Prostate gland (tissue), 2 donors: ENCODE measurements at regions of chr6 and their contacts with region 1.

Region 1: GRCh38 chr6:144284783-144285547 is at the start of gene UTRN:
- DNase-seq: peak; percentile 76
- H3K4me3 ChIP-seq: peak within 1 kb of the TSS; percentile 69 to 83
- H3K27ac ChIP-seq: peak within 1 kb of the TSS; percentile 90 to 94
- H3K4me1 ChIP-seq: no peaks in the 10 kb centered on the region
- H3K27me3 ChIP-seq: no peaks in the 10 kb centered on the region
- CTCF ChIP-seq: peak in 1 of 4 experiments; percentile 11
- POLR2A ChIP-seq: peak; percentile 19
- total RNA-seq, gene UTRN: 150 to 188 TPM

Region 2: GRCh38 chr6:144095331-144096002 is 189.5 kb before region 1 on chr6 and contains the start of gene SF3B5:
- intact Hi-C with region 1: loop called (anchors 5 kb)
- DNase-seq: peak; percentile 99
- H3K4me3 ChIP-seq: peak within 1 kb of the TSS; percentile 69 to 83
- H3K27ac ChIP-seq: peak within 1 kb of the TSS; percentile 73 to 82
- H3K4me1 ChIP-seq: peaks cover 4% of the 10 kb centered on the region
- H3K27me3 ChIP-seq: no peaks in the 10 kb centered on the region
- CTCF ChIP-seq: peak in 1 of 4 experiments; percentile 21
- POLR2A ChIP-seq: peak; percentile 67
- total RNA-seq, gene SF3B5: 198 to 212 TPM

Region 3: DNA sequence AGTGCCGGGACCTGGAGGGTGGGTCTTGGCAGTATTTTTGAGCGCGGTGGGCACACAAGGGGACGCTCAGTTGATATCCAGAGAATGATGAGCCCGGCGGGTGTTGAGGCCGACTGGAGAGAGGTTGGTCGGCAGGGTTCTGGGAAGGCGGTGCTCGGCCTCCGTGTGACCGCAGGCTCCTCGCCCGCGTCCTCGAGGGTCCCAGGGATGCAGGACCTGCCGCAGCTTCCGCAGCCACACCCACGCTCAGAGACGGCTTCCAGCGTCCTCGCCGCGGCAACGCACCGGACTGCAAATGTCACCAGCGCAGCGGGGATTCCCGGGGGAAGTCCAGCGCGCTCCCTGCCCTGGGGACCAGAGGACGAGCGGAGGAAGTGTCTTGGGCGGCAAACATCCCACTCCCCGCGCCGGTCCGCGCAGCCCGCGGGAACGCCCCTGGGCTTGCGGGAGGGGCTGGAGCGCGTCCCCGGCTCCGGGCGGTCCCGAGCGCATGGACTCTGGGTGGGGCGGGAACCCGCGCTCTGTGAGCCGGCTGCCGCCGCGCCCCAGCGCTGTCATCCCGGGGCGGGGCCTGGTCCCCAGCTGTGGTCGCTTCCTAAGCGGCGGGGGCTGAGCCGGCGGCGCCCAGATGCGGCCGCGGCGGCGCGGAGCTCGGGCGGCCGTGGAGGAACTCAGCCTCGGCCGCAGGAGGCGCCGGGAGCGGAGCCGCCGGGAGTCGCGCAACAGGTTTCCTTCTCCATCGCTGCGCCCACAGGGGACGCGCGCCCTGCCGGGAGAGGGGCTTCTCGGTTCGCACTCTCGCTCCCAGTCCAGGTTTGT is 134.9 kb before region 1 on chr6 and contains the start of gene STX11:
- intact Hi-C with region 1: no loop called
- DNase-seq: peak; percentile 21
- H3K4me3 ChIP-seq: peak within 1 kb of the TSS; percentile 48 to 56
- H3K27ac ChIP-seq: peak within 1 kb of the TSS in 1 of 2 donors; percentile 14
- H3K4me1 ChIP-seq: no peaks in the 10 kb centered on the region
- H3K27me3 ChIP-seq: no peaks in the 10 kb centered on the region
- CTCF ChIP-seq: no peak
- POLR2A ChIP-seq: peak; percentile 22
- total RNA-seq, gene STX11: 1.4 to 8.0 TPM

Region 4: GRCh38 chr6:144215932-144216667 is 68.9 kb before region 1 on chr6:
- intact Hi-C with region 1: loop called (anchors 5 kb)
- DNase-seq: peak; percentile 96
- H3K4me3 ChIP-seq: peak overlapping the region; percentile 52 to 58
- H3K27ac ChIP-seq: peak overlapping the region; percentile 93 to 95
- H3K4me1 ChIP-seq: peaks cover 6% of the 10 kb centered on the region
- H3K27me3 ChIP-seq: no peaks in the 10 kb centered on the region
- CTCF ChIP-seq: peak; percentile 50 to 84 (median 67)
- POLR2A ChIP-seq: peak; percentile 45

Region 5: GRCh38 chr6:144377586-144378210 is 92.7 kb after region 1 on chr6:
- intact Hi-C with region 1: loop called (anchors 10 kb)
- DNase-seq: no peak
- H3K4me3 ChIP-seq: no peak overlapping the region
- H3K27ac ChIP-seq: peak overlapping the region; percentile 34 to 38
- H3K4me1 ChIP-seq: no peaks in the 10 kb centered on the region
- H3K27me3 ChIP-seq: no peaks in the 10 kb centered on the region
- CTCF ChIP-seq: no peak
- POLR2A ChIP-seq: no peak

Region 6: DNA sequence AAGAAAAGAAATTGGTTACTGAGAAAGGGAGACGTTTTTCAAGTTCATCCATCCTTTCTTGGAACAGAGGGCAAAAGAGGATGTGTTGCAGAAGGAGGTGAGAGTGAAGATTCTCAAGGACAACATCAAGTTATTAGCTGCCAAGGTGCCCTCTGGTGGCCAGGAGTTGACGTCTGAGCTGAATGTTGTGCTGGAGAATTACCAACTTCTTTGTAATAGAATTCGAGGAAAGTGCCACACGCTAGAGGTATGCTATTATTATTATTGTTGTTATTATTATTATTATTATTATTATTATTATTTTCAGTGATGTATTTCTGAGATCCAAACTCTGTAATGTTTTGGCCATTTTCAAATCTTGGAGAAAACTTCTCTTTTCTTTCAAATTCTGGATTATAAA is 197.2 kb after region 1 on chr6:
- intact Hi-C with region 1: loop called (anchors 10 kb)
- DNase-seq: peak; percentile 82
- H3K4me3 ChIP-seq: no peak overlapping the region
- H3K27ac ChIP-seq: no peak overlapping the region
- H3K4me1 ChIP-seq: no peaks in the 10 kb centered on the region
- H3K27me3 ChIP-seq: no peaks in the 10 kb centered on the region
- CTCF ChIP-seq: peak; percentile 57 to 77 (median 60)
- POLR2A ChIP-seq: no peak